ENCODE measurements at regions of chr16 and their contacts with region 1.

Region 1: GRCh38 chr16:24041826-24042631 is 206.2 kb downstream of the PRKCB start:
- DNase-seq: peak; percentile 75
- H3K4me3 ChIP-seq: peak overlapping the region in 1 of 2 experiments; percentile 48; a peak in 1 of 4 replicates
- H3K27ac ChIP-seq: no peak overlapping the region
- H3K4me1 ChIP-seq: no peaks in the 10 kb centered on the region; a peak in 1 of 4 replicates
- H3K27me3 ChIP-seq: no peaks in the 10 kb centered on the region
- CTCF ChIP-seq: peak; percentile 85
- EP300 ChIP-seq: no peak
- RAD21 ChIP-seq: peak; percentile 86

Region 2: DNA sequence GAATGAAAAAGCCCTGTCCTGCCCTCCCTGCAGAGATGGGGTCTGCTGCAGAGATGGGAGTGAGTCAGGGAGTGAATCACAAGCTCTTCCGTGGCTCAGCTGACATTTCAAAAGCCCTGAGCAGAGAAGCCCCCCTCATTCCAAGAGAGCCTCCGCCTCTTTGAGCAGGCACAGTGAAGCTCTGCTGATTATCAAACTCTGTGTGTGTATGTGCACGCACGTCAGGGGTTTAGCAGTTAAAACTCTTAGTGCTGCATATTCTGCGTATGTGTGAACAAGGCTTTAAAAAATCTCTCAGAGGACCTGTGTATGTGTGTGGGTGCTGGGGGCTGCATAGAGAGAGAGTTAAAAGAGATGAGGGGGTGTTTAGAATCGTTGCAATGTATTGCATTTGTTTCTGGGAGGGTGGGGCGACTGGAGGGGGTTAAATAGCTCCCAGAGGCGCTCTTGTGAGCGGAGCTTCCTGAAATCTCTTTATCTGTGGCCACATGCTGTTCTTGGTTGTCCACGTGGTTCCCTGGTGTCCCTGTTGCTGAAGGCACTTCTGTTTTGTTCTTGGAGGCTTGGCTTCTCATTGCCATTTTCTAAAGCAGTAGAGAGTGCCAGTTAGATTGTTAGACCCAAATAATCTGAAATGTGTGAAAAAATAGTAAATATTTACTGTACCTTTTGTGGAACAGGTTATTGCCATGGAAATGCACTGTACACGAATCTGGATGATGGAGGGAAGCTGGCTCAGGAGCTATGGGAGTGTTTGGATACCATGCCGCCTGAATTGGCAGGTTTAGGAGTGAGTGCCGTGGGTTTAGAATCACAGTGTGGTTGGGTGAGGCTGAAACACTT is 89.7 kb before region 1 on chr16:
- CTCF ChIA-PET with region 1: no interaction called
- POLR2A ChIA-PET with region 1: no interaction called
- DNase-seq: peak; percentile 22
- H3K4me3 ChIP-seq: no peak overlapping the region
- H3K27ac ChIP-seq: no peak overlapping the region
- H3K4me1 ChIP-seq: no peaks in the 10 kb centered on the region; a peak in 2 of 4 replicates
- H3K27me3 ChIP-seq: no peaks in the 10 kb centered on the region
- CTCF ChIP-seq: no peak
- EP300 ChIP-seq: no peak
- RAD21 ChIP-seq: no peak

Region 3: DNA sequence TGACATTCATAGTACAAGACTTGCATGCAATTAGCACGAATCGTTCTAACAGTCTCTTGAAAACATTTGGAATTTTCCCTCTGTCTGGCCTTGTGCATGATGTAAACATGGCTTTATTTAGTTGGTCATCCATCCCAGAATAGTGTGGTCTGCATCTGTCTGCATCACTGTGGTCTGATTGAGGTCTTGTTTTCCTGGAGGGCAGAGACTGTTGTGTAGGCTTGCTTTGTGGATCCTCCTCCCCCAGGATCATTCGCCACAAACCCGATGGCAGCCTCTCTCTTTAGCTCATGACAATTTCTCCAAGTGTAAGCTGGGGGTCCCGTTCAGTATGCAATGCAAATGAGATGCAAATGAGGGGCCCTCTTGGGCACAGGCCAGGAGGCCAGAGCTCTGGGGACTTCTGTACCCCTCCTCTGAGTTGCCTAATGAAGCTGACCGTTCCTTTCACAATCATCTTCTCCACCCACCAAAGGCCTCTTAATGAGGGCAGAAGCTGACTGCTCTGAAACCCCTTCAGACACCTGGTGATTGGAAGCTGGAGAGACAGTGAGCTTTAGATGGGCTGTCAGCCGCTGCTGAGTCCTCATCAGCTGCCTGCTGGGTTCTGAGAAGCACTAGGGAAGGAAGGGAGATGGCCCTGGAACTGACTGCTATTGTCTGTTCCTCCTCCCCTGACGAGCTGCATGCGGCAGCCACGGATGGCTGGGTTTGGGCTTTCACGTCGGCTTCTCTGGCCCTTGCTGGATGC is 12.9 kb after region 1 on chr16:
- CTCF ChIA-PET with region 1: interaction called, 33 read pairs
- POLR2A ChIA-PET with region 1: no interaction called
- DNase-seq: no peak
- H3K4me3 ChIP-seq: no peak overlapping the region
- H3K27ac ChIP-seq: no peak overlapping the region
- H3K4me1 ChIP-seq: no peaks in the 10 kb centered on the region
- H3K27me3 ChIP-seq: no peaks in the 10 kb centered on the region
- CTCF ChIP-seq: no peak
- EP300 ChIP-seq: no peak
- RAD21 ChIP-seq: no peak

Region 4: DNA sequence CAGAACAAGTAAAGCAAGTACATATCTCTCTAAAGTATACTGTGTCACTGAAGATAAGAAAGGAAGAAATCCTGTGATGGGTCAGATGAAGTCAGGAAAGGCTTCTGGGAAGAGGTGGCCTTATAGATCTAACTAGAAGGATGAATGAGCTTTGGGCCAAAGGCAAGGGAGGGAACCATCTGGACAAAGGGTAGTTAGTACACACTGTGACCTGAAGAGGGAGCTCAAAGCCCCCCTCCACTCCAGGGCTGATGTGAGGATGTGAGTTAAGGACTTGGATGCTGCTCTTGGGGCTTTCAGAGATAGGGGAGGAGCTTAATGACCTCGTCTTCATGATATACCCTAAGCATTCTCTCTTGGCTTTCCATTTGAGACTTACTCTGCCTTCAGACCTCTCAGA is 28.8 kb after region 1 on chr16:
- CTCF ChIA-PET with region 1: interaction called, 17 read pairs
- POLR2A ChIA-PET with region 1: no interaction called
- DNase-seq: peak; percentile 67
- H3K4me3 ChIP-seq: peak overlapping the region in 1 of 2 experiments; percentile 39; a peak in 1 of 4 replicates
- H3K27ac ChIP-seq: no peak overlapping the region
- H3K4me1 ChIP-seq: peaks cover 0 to 4% of the 10 kb centered on the region in 2 experiments; a peak in 2 of 4 replicates
- H3K27me3 ChIP-seq: no peaks in the 10 kb centered on the region
- CTCF ChIP-seq: peak; percentile 46
- EP300 ChIP-seq: no peak
- RAD21 ChIP-seq: peak; percentile 70

Region 5: DNA sequence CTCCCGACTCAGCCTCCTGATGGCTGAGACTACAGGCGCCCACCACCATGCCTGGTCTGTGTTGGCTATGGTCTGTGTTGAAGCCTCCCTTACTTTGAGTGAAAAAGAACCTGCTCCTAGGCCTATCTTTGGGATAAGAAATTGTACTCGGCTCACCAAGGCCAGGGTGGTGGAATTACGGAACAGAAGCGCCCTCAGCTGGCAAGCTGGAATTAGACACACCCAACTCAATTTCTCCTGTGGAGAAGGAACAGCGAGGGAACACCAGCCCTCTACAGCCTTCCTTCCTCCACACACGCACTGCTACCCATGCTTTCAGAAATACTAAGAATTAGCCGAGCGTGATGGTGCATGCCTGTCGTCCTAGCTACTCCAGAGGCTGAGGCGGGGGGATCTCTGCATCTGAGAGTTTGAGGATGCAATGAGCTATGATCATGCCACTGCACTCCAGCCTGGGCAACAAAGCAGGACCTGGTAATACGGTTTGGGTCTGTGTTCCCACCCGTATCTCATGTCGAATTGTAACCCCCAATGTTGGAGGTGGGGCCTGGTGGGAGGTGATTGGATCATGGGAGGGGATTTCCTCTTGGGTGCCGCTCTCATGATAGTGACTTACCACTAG is 457.3 kb after region 1 on chr16:
- CTCF ChIA-PET with region 1: interaction called, 172 read pairs
- POLR2A ChIA-PET with region 1: no interaction called
- DNase-seq: peak; percentile 47
- H3K4me3 ChIP-seq: no peak overlapping the region; a peak in 1 of 4 replicates
- H3K27ac ChIP-seq: no peak overlapping the region
- H3K4me1 ChIP-seq: no peaks in the 10 kb centered on the region; a peak in 1 of 4 replicates
- H3K27me3 ChIP-seq: no peaks in the 10 kb centered on the region
- CTCF ChIP-seq: peak; percentile 51
- EP300 ChIP-seq: no peak
- RAD21 ChIP-seq: peak; percentile 75

Region 6: GRCh38 chr16:24516900-24517669 is 475.1 kb after region 1 on chr16:
- CTCF ChIA-PET with region 1: interaction called, 11 read pairs
- POLR2A ChIA-PET with region 1: no interaction called
- DNase-seq: peak; percentile 71
- H3K4me3 ChIP-seq: peak overlapping the region in 1 of 2 experiments; percentile 54; a peak in 1 of 4 replicates
- H3K27ac ChIP-seq: no peak overlapping the region
- H3K4me1 ChIP-seq: no peaks in the 10 kb centered on the region
- H3K27me3 ChIP-seq: no peaks in the 10 kb centered on the region
- CTCF ChIP-seq: peak; percentile 92
- EP300 ChIP-seq: no peak
- RAD21 ChIP-seq: peak; percentile 91

Measured in SK-N-SH (cell line).